ENCODE measurements at regions of chr3 and their contacts with region 1.

Region 1: DNA sequence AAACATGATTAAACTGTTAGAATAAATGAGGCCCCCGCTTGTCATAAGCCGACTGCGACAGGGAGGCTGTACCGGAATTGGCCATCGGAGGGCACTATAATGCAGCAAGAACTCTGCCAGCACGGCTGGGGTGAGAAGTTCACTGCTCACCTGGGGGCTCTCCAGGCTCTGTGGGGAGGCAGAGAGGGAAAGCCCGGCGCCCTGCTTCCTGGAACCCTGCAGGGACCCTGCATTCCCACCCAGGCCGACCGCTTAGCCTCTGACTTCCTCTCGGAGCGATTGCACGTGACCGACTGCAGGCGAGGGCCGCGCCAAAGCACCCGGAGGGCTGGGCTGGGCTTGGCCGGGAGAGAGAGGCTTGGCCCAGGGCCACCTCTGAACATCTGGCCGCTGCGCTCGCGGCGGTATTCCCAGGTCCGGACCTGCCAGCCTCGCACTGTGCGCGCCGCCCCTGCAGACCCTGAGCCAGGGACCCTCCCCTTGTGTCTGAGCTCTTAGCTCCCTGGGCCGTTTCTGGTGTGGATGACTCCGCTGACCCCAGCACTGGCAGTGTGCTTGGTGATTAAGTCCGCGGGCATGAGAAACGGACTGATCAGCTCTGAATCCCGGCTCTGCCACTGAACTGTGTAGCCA is 26.2 kb downstream of the DRD3 start:
- DNase-seq: peak; percentile 90
- H3K4me3 Mint-ChIP-seq: peak overlapping the region; percentile 43
- H3K27ac Mint-ChIP-seq: peak overlapping the region; percentile 53
- H3K4me1 Mint-ChIP-seq: no peaks in the 10 kb centered on the region
- H3K27me3 Mint-ChIP-seq: no peaks in the 10 kb centered on the region

Region 2: GRCh38 chr3:113736548-113737089 is 416.0 kb before region 1 on chr3:
- CTCF ChIA-PET with region 1: no interaction called
- intact Hi-C with region 1: loop called (anchors 5 kb)
- DNase-seq: no peak
- H3K4me3 Mint-ChIP-seq: no peak overlapping the region
- H3K27ac Mint-ChIP-seq: peak overlapping the region; percentile 56
- H3K4me1 Mint-ChIP-seq: peaks cover 65% of the 10 kb centered on the region
- H3K27me3 Mint-ChIP-seq: no peaks in the 10 kb centered on the region

Region 3: GRCh38 chr3:114290911-114291901 is 138.6 kb after region 1 on chr3:
- CTCF ChIA-PET with region 1: interaction called, 16 read pairs
- intact Hi-C with region 1: loop called (anchors 1 kb)
- DNase-seq: peak; percentile 93
- H3K4me3 Mint-ChIP-seq: peak overlapping the region; percentile 33
- H3K27ac Mint-ChIP-seq: peak overlapping the region; percentile 85
- H3K4me1 Mint-ChIP-seq: peaks cover 7% of the 10 kb centered on the region
- H3K27me3 Mint-ChIP-seq: no peaks in the 10 kb centered on the region

Region 4: DNA sequence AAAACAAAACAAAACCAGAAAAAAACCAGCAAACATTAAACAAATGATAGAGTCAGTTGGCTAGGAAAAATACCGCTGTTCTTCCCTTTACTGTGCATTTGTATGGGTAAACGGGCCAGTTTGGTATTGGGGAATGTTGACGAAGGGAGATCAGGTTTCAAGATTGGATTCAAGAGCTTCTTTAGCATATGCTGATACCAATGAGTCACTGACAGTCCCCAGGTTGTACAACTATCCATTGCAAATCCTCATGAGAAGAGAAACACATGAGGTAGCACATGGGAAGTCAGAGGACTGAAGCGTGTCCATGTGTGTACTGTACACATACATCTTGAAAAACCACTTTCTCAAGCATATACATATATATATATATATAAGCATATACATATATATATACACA is 166.8 kb after region 1 on chr3:
- CTCF ChIA-PET with region 1: interaction called, 12 read pairs
- intact Hi-C with region 1: no loop called
- DNase-seq: no peak
- H3K4me3 Mint-ChIP-seq: no peak overlapping the region
- H3K27ac Mint-ChIP-seq: no peak overlapping the region
- H3K4me1 Mint-ChIP-seq: peaks cover 36% of the 10 kb centered on the region
- H3K27me3 Mint-ChIP-seq: no peaks in the 10 kb centered on the region

Region 5: DNA sequence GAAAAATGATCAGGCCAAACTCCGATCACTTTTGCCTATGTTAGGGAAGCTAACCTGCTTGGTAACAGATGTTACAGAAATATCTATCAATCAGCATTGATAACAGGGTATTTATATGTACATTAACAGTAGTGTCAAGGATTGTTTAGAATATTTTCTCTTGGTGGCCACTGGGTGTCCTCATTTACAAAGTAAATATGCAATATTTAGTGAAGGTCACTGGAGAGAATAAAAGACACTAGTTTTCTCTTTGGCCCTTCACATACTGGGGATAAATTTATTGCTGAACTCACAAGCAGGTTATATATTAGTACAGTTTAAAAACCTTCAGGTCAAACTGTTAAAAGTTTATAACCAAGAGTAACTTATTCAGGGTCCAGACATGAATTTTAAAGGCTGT is 210.2 kb after region 1 on chr3:
- CTCF ChIA-PET with region 1: interaction called, 4 read pairs
- intact Hi-C with region 1: loop called (anchors 1 kb)
- DNase-seq: no peak
- H3K4me3 Mint-ChIP-seq: no peak overlapping the region
- H3K27ac Mint-ChIP-seq: no peak overlapping the region
- H3K4me1 Mint-ChIP-seq: peaks cover 2% of the 10 kb centered on the region
- H3K27me3 Mint-ChIP-seq: no peaks in the 10 kb centered on the region

Region 6: GRCh38 chr3:115169808-115170207 is 1017.2 kb after region 1 on chr3:
- CTCF ChIA-PET with region 1: no interaction called
- intact Hi-C with region 1: loop called (anchors 10 kb)
- DNase-seq: no peak
- H3K4me3 Mint-ChIP-seq: no peak overlapping the region
- H3K27ac Mint-ChIP-seq: no peak overlapping the region
- H3K4me1 Mint-ChIP-seq: peaks cover 12% of the 10 kb centered on the region
- H3K27me3 Mint-ChIP-seq: no peaks in the 10 kb centered on the region

Region 7: GRCh38 chr3:115388166-115388565 is 1235.5 kb after region 1 on chr3:
- CTCF ChIA-PET with region 1: no interaction called
- intact Hi-C with region 1: no loop called
- DNase-seq: no peak
- H3K4me3 Mint-ChIP-seq: no peak overlapping the region
- H3K27ac Mint-ChIP-seq: no peak overlapping the region
- H3K4me1 Mint-ChIP-seq: peaks cover 9% of the 10 kb centered on the region
- H3K27me3 Mint-ChIP-seq: no peaks in the 10 kb centered on the region